ENCODE measurements at regions of chr9 and their contacts with region 1.

Region 1: GRCh38 chr9:105694190-105694847 is at the start of gene TMEM38B:
- DNase-seq: peak; percentile 73
- H3K4me3 Mint-ChIP-seq: peak within 1 kb of the TSS; percentile 83
- H3K27ac Mint-ChIP-seq: peak within 1 kb of the TSS; percentile 53
- H3K4me1 Mint-ChIP-seq: peaks cover 13% of the 10 kb centered on the region
- H3K27me3 Mint-ChIP-seq: peaks cover 27% of the 10 kb centered on the region
- total RNA-seq, gene TMEM38B: 11.3 and 13.1 TPM in 2 replicates

Region 2: DNA sequence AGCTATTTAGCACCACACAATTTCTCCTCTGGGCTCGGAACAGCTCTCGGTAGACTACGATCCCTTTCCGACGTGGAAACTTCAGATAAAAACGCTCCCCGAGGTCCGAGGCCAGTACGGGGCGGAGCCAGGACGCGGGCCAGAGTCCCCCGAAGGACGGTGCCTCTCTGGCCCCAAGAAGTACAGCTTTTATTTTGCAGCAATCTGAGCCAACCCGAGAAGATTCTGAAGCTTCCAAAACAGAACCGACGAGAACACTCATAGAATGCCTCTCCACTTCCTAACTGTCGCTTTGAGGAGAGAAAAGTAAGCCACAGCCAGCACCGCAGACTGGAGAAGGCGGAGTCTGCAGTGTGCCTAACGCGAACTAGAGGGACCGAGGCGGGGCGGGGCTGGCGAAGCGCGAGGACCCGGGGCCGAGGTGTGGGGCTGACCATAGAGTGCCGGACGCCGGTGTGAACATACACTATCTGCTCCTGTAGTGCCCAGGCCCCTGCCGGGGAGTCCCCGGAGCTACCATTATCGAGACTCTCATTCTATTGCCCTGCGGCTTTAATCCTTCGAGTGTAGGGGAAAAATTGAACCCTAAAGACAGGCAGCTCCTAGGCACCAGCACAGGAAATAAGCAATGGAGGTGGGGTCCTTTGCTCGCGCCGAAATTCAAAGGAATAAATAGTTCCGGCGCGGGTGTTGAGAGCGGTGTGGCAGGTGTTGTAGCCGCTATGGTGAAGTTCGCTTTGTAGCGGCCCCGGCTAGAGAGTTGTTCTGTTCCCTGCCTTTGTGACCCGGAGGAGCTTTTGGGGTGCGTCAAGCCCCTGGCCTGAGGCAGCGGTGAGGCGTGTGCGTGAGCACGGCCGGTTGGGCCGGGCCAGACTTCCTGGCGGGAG is 1600.4 kb before region 1 on chr9 and contains the start of gene SMC2:
- intact Hi-C with region 1: loop called (anchors 10 kb)
- DNase-seq: peak; percentile 91
- H3K4me3 Mint-ChIP-seq: peak within 1 kb of the TSS; percentile 95
- H3K27ac Mint-ChIP-seq: peak within 1 kb of the TSS; percentile 99
- H3K4me1 Mint-ChIP-seq: peaks cover 44% of the 10 kb centered on the region
- H3K27me3 Mint-ChIP-seq: no peaks in the 10 kb centered on the region
- total RNA-seq, gene SMC2: 56.1 and 57.5 TPM in 2 replicates

Region 3: GRCh38 chr9:104765138-104765537 is 929.2 kb before region 1 on chr9:
- intact Hi-C with region 1: loop called (anchors 10 kb)
- DNase-seq: no peak
- H3K4me3 Mint-ChIP-seq: peak overlapping the region; percentile 24
- H3K27ac Mint-ChIP-seq: no peak overlapping the region
- H3K4me1 Mint-ChIP-seq: no peaks in the 10 kb centered on the region
- H3K27me3 Mint-ChIP-seq: peaks cover 10% of the 10 kb centered on the region

Region 4: GRCh38 chr9:105447814-105448812 is 246.2 kb before region 1 on chr9 and contains the start of gene FSD1L:
- intact Hi-C with region 1: loop called (anchors 10 kb)
- DNase-seq: peak; percentile 80
- H3K4me3 Mint-ChIP-seq: peak within 1 kb of the TSS; percentile 83
- H3K27ac Mint-ChIP-seq: no peak within 1 kb of the TSS
- H3K4me1 Mint-ChIP-seq: peaks cover 17% of the 10 kb centered on the region
- H3K27me3 Mint-ChIP-seq: peaks cover 20% of the 10 kb centered on the region
- total RNA-seq, gene FSD1L: 3.2 and 3.7 TPM in 2 replicates

Region 5: GRCh38 chr9:105557771-105558610 is 136.3 kb before region 1 on chr9 and contains the start of gene FKTN:
- intact Hi-C with region 1: loop called (anchors 5 kb)
- DNase-seq: peak; percentile 73
- H3K4me3 Mint-ChIP-seq: peak within 1 kb of the TSS; percentile 90
- H3K27ac Mint-ChIP-seq: peak within 1 kb of the TSS; percentile 51
- H3K4me1 Mint-ChIP-seq: peaks cover 13% of the 10 kb centered on the region
- H3K27me3 Mint-ChIP-seq: no peaks in the 10 kb centered on the region
- total RNA-seq, gene FKTN: 10.3 and 11.3 TPM in 2 replicates